Activated naive CD4-positive, alpha-beta T cell treated with anti-CD3 and anti-CD28 coated beads for 36 hours (primary cell): ENCODE measurements at regions of chr3 and their contacts with region 1.

Region 1: DNA sequence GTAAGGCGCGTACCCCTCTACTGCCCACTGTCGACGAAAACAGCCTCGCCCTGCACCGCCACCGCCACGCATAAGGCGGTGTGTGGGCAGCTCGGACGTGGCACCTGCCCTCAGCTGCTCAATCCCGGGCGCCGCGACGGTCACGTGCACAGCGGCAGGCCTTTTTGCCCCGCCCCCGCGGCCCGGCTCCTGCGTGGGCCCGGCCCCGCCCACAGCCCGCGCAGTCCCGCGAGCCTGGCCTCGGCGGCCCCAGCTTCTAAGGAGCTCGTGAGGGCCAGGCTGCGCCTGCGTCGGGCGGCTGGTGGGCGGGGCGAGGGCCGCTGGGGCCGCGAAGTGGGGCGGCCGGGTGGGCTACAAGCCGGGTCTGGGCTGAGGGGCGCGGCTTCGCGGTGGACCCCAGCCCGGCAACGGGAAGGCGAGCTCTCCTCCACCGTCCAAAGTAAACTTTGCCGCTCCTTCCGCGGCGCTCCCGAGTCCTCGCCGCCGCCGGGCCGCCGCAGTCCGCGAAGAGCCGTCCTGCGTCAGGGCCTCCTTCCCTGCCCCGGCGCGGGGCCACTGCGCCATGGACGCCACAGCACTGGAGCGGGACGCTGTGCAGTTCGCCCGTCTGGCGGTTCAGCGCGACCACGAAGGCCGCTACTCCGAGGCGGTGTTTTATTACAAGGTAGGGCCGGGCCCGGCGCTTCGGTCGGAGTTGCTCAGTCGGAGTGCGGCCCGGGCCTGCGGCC is at the start of gene CAPN7:
- DNase-seq: peak; percentile 92
- H3K4me3 Mint-ChIP-seq: peak within 1 kb of the TSS; percentile 82
- H3K27ac Mint-ChIP-seq: peak within 1 kb of the TSS; percentile 77
- H3K4me1 Mint-ChIP-seq: peaks cover 23% of the 10 kb centered on the region
- H3K27me3 Mint-ChIP-seq: no peaks in the 10 kb centered on the region
- total RNA-seq, gene CAPN7: 23.7 to 26.1 TPM

Region 2: GRCh38 chr3:14947886-14948555 is 258.1 kb before region 1 on chr3:
- CTCF ChIA-PET with region 1: interaction called, 4 read pairs
- intact Hi-C with region 1: loop called (anchors 1 kb)
- DNase-seq: peak; percentile 97
- H3K4me3 Mint-ChIP-seq: peak overlapping the region; percentile 99
- H3K27ac Mint-ChIP-seq: peak overlapping the region; percentile 100
- H3K4me1 Mint-ChIP-seq: peaks cover 42% of the 10 kb centered on the region
- H3K27me3 Mint-ChIP-seq: no peaks in the 10 kb centered on the region

Region 3: DNA sequence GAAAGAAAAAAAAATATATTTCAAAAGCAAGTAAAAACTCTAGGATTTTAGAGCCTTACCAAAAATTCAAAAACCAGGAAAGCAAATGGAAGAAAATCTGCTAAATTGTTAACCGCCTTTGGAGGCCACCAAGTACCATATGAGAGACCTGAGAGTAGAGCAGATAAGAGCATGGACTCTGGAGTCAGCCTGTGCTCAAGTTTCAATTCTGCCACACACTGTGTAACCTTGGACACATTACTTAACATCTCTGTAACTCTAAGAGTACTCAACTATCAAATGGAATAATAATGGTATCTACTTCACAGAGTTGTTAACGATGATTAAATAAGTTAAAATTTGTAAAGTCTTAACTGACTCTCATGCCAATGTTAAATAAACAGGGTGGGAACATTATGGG is 119.8 kb before region 1 on chr3:
- CTCF ChIA-PET with region 1: no interaction called
- intact Hi-C with region 1: no loop called
- DNase-seq: no peak
- H3K4me3 Mint-ChIP-seq: no peak overlapping the region
- H3K27ac Mint-ChIP-seq: no peak overlapping the region
- H3K4me1 Mint-ChIP-seq: no peaks in the 10 kb centered on the region
- H3K27me3 Mint-ChIP-seq: no peaks in the 10 kb centered on the region

Region 4: DNA sequence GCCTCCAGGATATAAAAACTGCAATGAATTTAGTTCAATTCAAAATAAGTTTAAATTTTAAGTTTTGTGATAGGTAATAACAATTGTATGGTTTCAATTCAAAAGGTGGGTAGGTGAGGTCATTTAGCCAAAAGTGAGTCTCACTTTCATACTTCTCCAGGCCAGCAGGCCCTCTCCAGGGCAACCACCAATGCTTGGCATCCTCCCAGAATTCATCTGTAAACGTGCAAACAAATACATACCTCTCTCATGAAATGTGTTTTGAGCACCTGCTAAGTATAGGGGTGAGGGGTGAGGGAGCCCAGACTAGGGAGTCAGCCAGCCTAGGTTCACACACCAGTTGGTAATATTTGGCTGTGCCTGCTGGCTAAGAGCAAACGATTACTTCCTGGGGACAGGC is 85.1 kb before region 1 on chr3:
- CTCF ChIA-PET with region 1: interaction called, 39 read pairs
- intact Hi-C with region 1: no loop called
- DNase-seq: no peak
- H3K4me3 Mint-ChIP-seq: no peak overlapping the region
- H3K27ac Mint-ChIP-seq: no peak overlapping the region
- H3K4me1 Mint-ChIP-seq: peaks cover 5% of the 10 kb centered on the region
- H3K27me3 Mint-ChIP-seq: peaks cover 6% of the 10 kb centered on the region

Region 5: GRCh38 chr3:15361494-15362212 is 155.6 kb after region 1 on chr3:
- CTCF ChIA-PET with region 1: no interaction called
- intact Hi-C with region 1: no loop called
- DNase-seq: peak; percentile 86
- H3K4me3 Mint-ChIP-seq: no peak overlapping the region
- H3K27ac Mint-ChIP-seq: peak overlapping the region; percentile 83
- H3K4me1 Mint-ChIP-seq: peaks cover 42% of the 10 kb centered on the region
- H3K27me3 Mint-ChIP-seq: peaks cover 2% of the 10 kb centered on the region

Region 6: DNA sequence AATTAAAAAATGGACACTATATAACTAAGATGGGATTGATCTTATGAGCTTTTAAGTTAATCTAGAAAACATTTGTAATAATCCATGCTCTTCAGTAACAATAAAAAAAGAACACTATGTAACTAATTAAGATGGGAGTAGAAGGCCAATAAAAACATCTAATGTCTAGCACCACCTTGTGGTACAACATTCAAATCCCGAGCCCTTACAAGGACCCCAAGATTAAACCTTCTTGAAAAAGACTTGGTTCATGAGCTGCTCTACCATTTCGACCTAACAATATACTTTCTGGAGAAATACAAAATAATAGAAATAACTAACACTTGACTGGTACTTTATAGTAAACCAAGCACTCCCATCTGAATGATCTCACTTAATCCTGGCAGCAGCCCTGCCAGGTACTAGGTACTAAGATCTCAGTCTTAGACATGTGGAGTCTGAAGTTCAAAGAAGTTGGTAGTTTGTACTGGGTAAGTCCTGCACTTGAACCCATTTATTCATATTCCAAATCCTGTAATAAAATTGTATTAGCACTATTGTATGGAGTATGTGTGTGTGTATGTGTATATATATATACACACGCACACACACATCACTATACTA is 199.5 kb after region 1 on chr3:
- CTCF ChIA-PET with region 1: interaction called, 38 read pairs
- intact Hi-C with region 1: loop called (anchors 1 kb)
- DNase-seq: peak; percentile 10
- H3K4me3 Mint-ChIP-seq: no peak overlapping the region
- H3K27ac Mint-ChIP-seq: no peak overlapping the region
- H3K4me1 Mint-ChIP-seq: peaks cover 1% of the 10 kb centered on the region
- H3K27me3 Mint-ChIP-seq: no peaks in the 10 kb centered on the region

Region 7: DNA sequence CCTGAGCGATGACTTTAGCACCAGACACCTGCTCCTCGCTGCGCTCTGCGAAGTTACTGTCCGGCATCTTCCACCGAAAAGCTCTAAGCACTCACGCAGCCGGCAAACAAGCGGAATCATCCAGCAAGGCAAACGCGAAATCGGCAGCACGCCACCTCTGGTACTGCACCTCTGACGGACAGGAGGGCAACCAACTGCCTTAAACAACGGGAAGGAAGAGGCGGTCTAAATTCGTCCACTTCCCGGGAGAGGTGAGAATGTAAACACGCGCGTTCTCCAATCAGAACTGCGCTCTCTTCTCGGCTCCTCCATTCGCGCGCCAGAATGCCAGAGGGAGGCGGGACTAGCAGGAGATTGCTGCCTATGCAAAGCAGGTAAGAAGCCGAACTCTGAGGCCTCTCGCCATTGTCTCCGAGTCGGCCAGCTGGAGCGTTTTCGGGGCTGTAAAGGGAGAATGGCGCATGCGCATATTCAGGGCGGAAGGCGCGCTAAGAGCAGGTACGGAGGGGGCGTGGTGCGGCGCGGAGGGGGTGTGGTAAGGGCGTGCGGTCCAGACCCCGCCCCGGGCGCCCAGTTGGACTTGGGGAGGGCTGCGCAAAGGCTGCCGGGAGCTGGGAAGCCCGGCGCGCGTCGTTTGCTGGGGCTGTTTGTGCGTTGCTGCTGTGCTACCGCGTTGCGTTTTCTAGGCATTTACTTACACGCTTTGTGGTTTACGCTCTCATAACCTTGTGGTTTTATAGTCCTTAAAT is 395.5 kb after region 1 on chr3 and contains the starts of genes BTD and HACL1:
- CTCF ChIA-PET with region 1: no interaction called
- intact Hi-C with region 1: loop called (anchors 1 kb)
- DNase-seq: peak; percentile 99
- H3K4me3 Mint-ChIP-seq: peak within 1 kb of the TSS; percentile 99
- H3K27ac Mint-ChIP-seq: peak within 1 kb of the TSS; percentile 96
- H3K4me1 Mint-ChIP-seq: peaks cover 46% of the 10 kb centered on the region
- H3K27me3 Mint-ChIP-seq: no peaks in the 10 kb centered on the region
- total RNA-seq, gene BTD: 8.7 to 9.7 TPM
- total RNA-seq, gene HACL1: 25.3 to 26.5 TPM

Region 8: DNA sequence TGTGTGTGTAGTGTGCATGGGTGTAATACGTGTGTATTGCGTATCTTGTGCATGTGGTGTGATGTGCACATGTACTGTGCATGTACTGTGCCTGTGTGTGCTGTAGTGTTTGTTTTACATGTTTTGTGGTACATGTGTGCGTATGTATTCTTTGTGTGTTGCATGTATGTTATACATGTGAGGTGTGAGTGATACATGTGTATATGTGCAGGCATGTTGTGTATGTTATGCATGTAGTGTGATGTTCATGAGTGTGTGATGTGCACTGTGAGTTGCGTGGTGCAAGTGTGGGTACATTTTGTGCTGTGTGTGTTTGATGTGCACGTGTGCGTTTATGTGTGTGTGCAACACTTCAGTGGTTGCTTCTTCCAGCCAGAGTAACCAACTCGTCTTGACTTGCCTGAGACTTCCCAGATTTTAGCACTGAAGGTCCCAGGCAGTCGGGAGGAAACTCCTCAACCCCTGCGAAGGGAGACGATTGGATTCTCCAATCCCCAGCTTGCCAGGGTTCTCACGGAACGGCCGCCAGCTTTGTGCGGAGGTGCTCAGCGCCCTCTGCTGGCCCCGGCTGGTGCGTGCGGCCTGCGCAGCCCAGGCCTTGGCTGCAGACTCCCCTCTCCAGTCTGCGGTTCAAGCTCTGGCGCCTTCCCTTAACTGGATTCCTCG is 972.0 kb after region 1 on chr3:
- CTCF ChIA-PET with region 1: no interaction called
- intact Hi-C with region 1: loop called (anchors 2 kb)
- DNase-seq: peak; percentile 73
- H3K4me3 Mint-ChIP-seq: no peak overlapping the region
- H3K27ac Mint-ChIP-seq: no peak overlapping the region
- H3K4me1 Mint-ChIP-seq: peaks cover 2% of the 10 kb centered on the region
- H3K27me3 Mint-ChIP-seq: peaks cover 7% of the 10 kb centered on the region